Esophagus muscularis mucosa (tissue), 4 donors: ENCODE measurements at regions of chr14 and their contacts with region 1.

Region 1: DNA sequence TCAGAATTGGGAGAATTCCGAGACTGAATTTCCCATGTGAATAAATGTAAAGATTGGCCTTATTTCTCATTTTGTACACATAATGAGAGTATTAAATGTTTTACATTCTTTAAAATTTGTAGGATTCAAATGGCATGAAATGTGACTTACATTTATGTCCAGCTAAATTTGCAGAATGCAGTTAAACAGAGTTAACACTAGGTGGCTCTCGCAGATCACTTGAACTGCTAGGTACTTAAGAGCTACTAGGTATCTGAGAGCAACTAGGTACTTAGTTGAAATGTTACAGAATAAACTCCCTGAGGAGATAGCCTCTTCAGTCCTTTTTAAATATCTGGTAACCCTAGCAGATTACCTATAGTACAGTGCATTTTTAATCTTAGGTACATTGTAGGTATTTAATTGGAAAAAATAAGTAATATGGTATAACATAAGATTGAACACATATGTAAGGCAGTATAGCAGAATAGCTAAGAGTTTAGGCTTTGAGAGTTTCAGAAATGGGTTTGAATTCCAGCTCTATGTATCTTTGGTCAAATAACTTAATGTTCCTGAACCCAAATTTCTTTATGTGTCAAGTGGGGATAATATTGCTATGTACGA is 73.8 kb downstream of the KIAA0586 start:
- DNase-seq: no peak
- H3K4me3 ChIP-seq: no peak overlapping the region
- H3K27ac ChIP-seq: no peak overlapping the region
- H3K4me1 ChIP-seq: no peaks in the 10 kb centered on the region
- H3K27me3 ChIP-seq: no peaks in the 10 kb centered on the region
- CTCF ChIP-seq: peak; percentile 71 to 90 (median 73)
- EP300 ChIP-seq: no peak
- POLR2A ChIP-seq: no peak

Region 2: GRCh38 chr14:58637391-58638230 is 136.3 kb after region 1 on chr14 and contains the start of gene DACT1:
- intact Hi-C with region 1: loop called (anchors 2 kb)
- DNase-seq: peak; percentile 92
- H3K4me3 ChIP-seq: peak within 1 kb of the TSS; percentile 78 to 87 (median 84)
- H3K27ac ChIP-seq: peak within 1 kb of the TSS; percentile 82 to 93 (median 89)
- H3K4me1 ChIP-seq: peaks cover 18 to 45% (median 36%) of the 10 kb centered on the region in 4 donors
- H3K27me3 ChIP-seq: no peaks in the 10 kb centered on the region
- CTCF ChIP-seq: no peak
- EP300 ChIP-seq: no peak
- POLR2A ChIP-seq: no peak
- total RNA-seq, gene DACT1: 5.0 to 22.7 (median 8.6) TPM

Region 3: GRCh38 chr14:59055439-59056045 is 554.2 kb after region 1 on chr14:
- intact Hi-C with region 1: loop called (anchors 5 kb)
- DNase-seq: no peak
- H3K4me3 ChIP-seq: no peak overlapping the region
- H3K27ac ChIP-seq: no peak overlapping the region
- H3K4me1 ChIP-seq: no peaks in the 10 kb centered on the region
- H3K27me3 ChIP-seq: no peaks in the 10 kb centered on the region
- CTCF ChIP-seq: peak; percentile 66 to 73 (median 69)
- EP300 ChIP-seq: no peak
- POLR2A ChIP-seq: no peak

Region 4: GRCh38 chr14:59126710-59127432 is 625.6 kb after region 1 on chr14:
- intact Hi-C with region 1: loop called (anchors 10 kb)
- DNase-seq: no peak
- H3K4me3 ChIP-seq: no peak overlapping the region
- H3K27ac ChIP-seq: no peak overlapping the region
- H3K4me1 ChIP-seq: peaks cover 0 to 14% (median 11%) of the 10 kb centered on the region in 4 donors
- H3K27me3 ChIP-seq: no peaks in the 10 kb centered on the region
- CTCF ChIP-seq: peak; percentile 81 to 89 (median 83)
- EP300 ChIP-seq: no peak
- POLR2A ChIP-seq: no peak